GM12878 (cell line): ENCODE measurements at regions of chr9 and their contacts with region 1.

Region 1: GRCh38 chr9:37046683-37047082 is 12.6 kb upstream of the PAX5 start:
- DNase-seq: no peak
- ATAC-seq: no peak
- H3K4me3 ChIP-seq: no peak overlapping the region
- H3K27ac ChIP-seq: no peak overlapping the region
- H3K4me1 ChIP-seq: no peaks in the 10 kb centered on the region
- H3K27me3 ChIP-seq: no peaks in the 10 kb centered on the region
- CTCF ChIP-seq: no peak
- EP300 ChIP-seq: no peak
- POLR2A ChIP-seq: no peak
- RAD21 ChIP-seq: no peak

Region 2: DNA sequence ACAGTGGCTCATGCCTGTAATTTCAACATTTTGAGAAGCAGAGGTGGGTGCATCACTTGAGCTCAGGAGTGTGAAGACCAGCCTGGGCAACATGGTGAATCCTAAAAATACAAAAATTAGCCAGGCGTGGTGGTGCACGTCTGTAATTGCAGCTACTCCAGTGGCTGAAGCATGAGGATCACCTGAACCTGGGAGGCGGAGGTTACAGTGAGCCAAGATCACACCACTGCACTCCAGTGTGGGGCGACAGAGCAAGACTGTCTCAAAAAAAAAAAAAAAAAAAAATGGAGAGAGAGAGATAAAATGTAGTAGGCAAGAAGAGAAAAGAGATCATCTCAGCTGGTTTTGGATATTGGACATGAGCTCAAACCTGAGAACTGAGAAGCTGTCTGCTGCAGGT is 49.9 kb after region 1 on chr9:
- CTCF ChIA-PET with region 1: no interaction called
- POLR2A ChIA-PET with region 1: interaction called, 12 read pairs
- RAD21 ChIA-PET with region 1: no interaction called
- SMC1A ChIA-PET with region 1: no interaction called
- in situ Hi-C with region 1: no loop called
- intact Hi-C with region 1: no loop called
- DNase-seq: no peak
- ATAC-seq: no peak
- H3K4me3 ChIP-seq: no peak overlapping the region
- H3K27ac ChIP-seq: no peak overlapping the region
- H3K4me1 ChIP-seq: no peaks in the 10 kb centered on the region; the same call in 1 of the 2 replicates
- H3K27me3 ChIP-seq: no peaks in the 10 kb centered on the region
- CTCF ChIP-seq: no peak
- EP300 ChIP-seq: no peak
- POLR2A ChIP-seq: no peak
- RAD21 ChIP-seq: no peak